ENCODE measurements at regions of chr6 and their contacts with region 1.

Region 1: DNA sequence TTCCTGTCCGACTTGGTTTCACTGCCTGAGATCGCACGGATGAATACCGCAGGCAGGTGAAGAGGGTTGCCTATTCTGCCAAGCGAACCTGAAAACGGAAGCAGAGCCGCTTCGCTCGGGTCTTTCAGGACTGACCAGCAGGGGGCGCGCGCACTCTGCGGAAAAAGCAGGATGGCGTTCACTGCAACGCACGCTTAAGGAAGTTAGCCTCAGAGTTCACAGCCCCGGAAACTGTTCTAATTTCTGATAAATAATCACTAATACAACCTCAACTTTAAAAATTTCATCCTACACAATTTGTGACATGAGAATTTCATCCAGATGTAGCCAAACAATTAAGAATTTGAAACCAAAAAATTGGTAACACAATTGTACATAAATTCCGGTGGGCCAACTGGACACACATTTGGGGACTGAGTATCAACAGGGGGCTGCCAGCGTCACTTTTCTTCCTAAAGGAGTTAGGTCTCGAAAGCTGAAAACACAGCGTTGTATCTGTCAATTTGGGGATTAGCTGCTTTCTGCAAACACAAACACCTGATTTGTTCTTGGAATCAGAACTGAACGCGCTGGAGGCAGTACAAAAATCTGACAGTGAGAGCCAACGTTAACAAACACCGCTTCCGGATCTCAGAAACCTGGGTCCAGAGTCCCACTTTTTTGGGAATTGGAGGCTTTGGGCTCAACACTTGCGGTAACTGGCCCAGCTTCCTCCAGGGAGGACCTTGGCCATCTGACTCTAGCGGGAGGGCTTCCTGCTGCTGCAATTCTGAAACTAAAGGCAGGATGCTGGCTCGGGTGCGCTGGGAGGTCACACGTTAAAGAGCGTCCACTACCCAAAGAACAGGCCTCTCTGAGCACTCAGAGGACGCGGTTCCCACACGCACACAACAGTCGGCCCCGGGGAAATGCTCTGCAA is 8.8 kb downstream of the PXDC1 start:
- DNase-seq: peak; percentile 86
- H3K4me3 ChIP-seq: peak overlapping the region; percentile 42
- H3K27ac ChIP-seq: peak overlapping the region; percentile 93
- H3K4me1 ChIP-seq: peaks cover 98% of the 10 kb centered on the region
- H3K27me3 ChIP-seq: no peaks in the 10 kb centered on the region
- CTCF ChIP-seq: peak; percentile 95

Region 2: GRCh38 chr6:3623451-3624249 is 119.0 kb before region 1 on chr6:
- intact Hi-C with region 1: no loop called
- DNase-seq: no peak
- H3K4me3 ChIP-seq: no peak overlapping the region
- H3K27ac ChIP-seq: no peak overlapping the region
- H3K4me1 ChIP-seq: no peaks in the 10 kb centered on the region
- H3K27me3 ChIP-seq: peaks cover 76% of the 10 kb centered on the region
- CTCF ChIP-seq: no peak

Region 3: GRCh38 chr6:3887150-3887700 is 144.5 kb after region 1 on chr6:
- intact Hi-C with region 1: loop called (anchors 10 kb)
- DNase-seq: no peak
- H3K4me3 ChIP-seq: no peak overlapping the region
- H3K27ac ChIP-seq: peak overlapping the region; percentile 62
- H3K4me1 ChIP-seq: peaks cover 52% of the 10 kb centered on the region
- H3K27me3 ChIP-seq: no peaks in the 10 kb centered on the region
- CTCF ChIP-seq: peak; percentile 67

Region 4: DNA sequence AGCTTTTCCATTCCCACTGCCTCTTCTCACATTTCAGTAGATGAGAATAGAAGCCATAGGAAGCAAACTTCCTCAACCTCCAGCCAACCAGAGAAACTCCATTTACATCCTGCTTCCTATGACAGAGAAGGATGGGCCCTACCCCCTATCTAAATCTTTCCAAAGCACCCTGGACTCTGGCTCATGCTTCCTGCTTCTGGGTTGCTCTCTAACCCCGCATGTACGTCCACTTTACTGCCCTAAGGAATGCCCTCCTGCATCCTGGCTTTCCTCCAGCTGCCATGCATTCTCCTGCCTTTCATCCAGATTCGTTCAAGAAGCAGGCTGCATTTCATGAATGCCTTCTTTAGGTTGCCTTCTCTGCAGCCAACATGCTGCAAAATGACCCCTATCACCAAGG is 244.4 kb after region 1 on chr6:
- intact Hi-C with region 1: loop called (anchors 5 kb)
- DNase-seq: no peak
- H3K4me3 ChIP-seq: no peak overlapping the region
- H3K27ac ChIP-seq: no peak overlapping the region
- H3K4me1 ChIP-seq: peaks cover 19% of the 10 kb centered on the region
- H3K27me3 ChIP-seq: no peaks in the 10 kb centered on the region
- CTCF ChIP-seq: no peak